ENCODE measurements at regions of chr4 and their contacts with region 1.

Region 1: GRCh38 chr4:11623726-11624037 is 195.0 kb upstream of the HS3ST1 start:
- DNase-seq: no peak
- ATAC-seq: no peak

Region 2: DNA sequence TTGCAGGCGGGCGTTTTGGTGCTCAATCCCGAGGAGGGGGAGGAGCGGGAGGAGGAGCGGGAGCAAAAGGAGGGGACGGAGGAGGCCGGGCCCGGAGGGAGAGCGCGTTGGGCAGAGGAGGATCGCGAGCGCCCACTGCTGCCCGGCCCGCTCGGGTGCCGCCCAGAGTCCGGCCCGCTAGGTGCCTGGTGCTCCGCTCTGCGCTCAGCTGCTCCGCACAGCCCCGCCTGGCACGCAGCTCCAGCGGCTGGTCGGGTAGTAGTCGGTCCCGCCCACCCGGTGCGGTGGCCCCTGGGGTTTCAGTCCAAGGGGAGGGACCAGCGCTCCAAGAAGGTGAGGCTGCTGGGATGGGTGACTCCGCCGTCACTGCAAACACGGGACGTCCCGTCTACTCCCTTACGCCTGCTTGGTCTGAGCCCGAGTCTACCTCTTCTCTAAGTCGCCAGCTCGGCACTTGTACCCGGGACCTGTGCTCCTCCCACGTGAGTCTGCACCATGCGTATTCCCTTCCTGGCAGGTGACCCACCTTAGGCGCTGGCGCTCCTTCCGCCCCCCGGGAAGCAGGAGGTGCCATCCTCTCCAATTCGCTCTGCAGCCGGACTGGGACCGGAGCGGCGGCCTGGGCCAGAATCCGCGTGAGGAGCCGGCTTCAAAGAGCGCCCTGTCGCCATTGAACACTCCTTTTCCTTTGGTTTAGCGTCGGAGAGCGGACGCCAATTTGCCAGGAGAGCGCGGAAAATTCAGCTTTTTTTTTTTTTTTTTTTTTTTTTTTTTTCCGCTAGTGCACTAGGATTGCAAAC is 194.6 kb before region 1 on chr4:
- intact Hi-C with region 1: loop called (anchors 5 kb)
- DNase-seq: peak; percentile 89
- ATAC-seq: peak; percentile 96

Region 3: GRCh38 chr4:11505221-11505971 is 118.3 kb before region 1 on chr4:
- intact Hi-C with region 1: loop called (anchors 10 kb)
- DNase-seq: no peak
- ATAC-seq: no peak

Region 4: DNA sequence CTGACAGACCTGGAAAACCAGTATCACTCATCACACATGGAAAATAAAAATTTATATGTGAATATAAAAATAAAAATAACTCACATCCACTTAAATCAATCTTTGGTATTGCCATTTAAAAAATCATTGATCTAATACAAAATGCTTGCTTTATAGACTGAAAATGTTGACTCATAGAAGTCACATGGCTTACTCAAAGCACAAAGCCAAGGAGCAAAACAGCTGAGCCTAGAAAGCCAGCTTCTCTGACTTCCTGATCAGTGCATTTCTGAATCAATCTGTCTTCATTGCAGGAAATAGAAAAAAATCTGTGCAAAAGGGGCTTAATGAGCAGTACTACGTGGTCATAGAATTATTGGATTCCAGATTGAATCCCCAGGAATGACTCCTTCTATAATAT is 18.1 kb before region 1 on chr4:
- intact Hi-C with region 1: no loop called
- DNase-seq: no peak
- ATAC-seq: no peak

Measured in Right ventricle myocardium inferior (tissue), 1 donor.